ENCODE measurements at regions of chr19 and their contacts with region 1.

Region 1: DNA sequence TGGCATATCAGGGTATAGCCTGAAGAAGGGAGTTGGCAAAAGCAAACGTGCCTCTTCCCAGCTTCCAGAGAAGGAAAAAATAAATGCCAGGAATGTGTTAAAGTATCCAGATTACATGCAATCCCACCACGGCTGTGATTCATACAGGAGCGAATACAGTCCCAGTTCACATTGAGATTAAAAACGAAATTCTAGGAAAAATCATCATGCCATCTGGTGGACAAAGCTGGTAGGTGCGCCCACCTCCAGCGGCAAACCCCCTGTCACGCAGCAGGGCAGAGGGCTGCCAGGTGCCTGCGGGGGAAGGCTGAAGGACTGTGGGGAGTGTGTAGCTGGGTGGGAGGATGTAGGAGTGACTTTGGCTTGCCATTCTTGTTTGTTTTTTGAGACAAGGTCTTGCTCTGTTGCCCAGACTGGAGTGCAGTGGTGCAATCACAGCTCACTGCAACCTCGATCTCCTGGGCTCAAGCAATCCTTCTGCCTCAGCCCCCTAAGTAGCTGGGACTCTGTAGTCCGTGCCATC is 6.4 kb upstream of the DMWD start:
- DNase-seq: peak; percentile 32 to 59 (median 58)
- H3K4me3 ChIP-seq: no peak overlapping the region
- H3K4me3 Mint-ChIP-seq: peak overlapping the region in 1 of 2 donors; percentile 81
- H3K27ac ChIP-seq: no peak overlapping the region
- H3K27ac Mint-ChIP-seq: no peak overlapping the region
- H3K4me1 ChIP-seq: peaks cover under 1 to 2% of the 10 kb centered on the region in 2 donors
- H3K4me1 Mint-ChIP-seq: peaks cover 5% of the 10 kb centered on the region
- H3K27me3 ChIP-seq: peaks cover 45 to 95% of the 10 kb centered on the region in 2 donors
- H3K27me3 Mint-ChIP-seq: peaks cover 98 to 100% (median 99%) of the 10 kb centered on the region in 3 donors
- CTCF ChIP-seq: peak; percentile 93

Region 2: DNA sequence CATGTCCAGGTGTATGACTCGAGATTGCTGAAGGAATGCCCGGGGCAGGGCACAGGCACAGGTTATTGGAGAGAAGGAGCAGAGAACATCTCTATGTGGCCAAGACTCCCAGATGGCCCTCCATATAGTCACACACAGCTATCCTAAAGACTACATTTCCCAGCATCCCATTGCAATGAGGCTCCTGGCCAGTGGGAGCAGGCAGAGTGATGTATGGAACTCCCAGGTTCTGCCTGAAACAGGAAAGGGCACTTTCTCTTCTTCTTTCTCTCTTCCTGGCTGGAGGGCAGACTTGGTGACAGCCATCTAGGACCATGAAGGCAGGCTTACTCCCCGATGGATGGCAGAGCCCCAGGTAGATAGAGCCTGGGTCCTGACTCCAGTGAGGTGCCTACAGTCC is 407.7 kb before region 1 on chr19:
- intact Hi-C with region 1: no loop called
- DNase-seq: no peak
- H3K4me3 ChIP-seq: no peak overlapping the region
- H3K4me3 Mint-ChIP-seq: peak overlapping the region in 1 of 2 donors; percentile 76
- H3K27ac ChIP-seq: no peak overlapping the region
- H3K27ac Mint-ChIP-seq: peak overlapping the region in 1 of 7 donors; percentile 25
- H3K4me1 ChIP-seq: peaks cover 5% of the 10 kb centered on the region in 2 donors
- H3K4me1 Mint-ChIP-seq: peaks cover 10% of the 10 kb centered on the region
- H3K27me3 ChIP-seq: peaks cover 18 to 30% of the 10 kb centered on the region in 2 donors
- H3K27me3 Mint-ChIP-seq: peaks cover 42 to 47% (median 43%) of the 10 kb centered on the region in 3 donors
- CTCF ChIP-seq: no peak

Region 3: DNA sequence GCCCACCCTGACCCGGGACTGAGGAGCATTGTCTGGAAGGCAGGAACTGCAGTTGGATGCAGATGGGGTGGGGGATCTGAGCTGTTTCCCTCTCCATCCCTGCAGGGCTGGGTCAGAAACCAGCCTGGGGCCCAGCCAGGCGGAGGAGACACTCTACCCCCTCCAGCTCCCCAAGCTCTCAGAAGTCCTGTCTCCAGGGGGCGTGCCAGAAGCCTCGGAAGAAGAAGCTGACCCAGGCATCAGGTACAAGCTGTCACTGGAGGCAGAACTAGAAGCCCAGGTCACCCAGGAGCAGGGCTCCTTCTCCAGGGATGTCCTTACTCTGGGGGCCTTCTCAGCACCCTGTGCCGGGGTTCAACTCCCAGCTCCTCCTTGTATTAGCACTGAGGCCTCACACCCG is 45.5 kb before region 1 on chr19:
- intact Hi-C with region 1: no loop called
- DNase-seq: no peak
- H3K4me3 ChIP-seq: no peak overlapping the region
- H3K4me3 Mint-ChIP-seq: no peak overlapping the region
- H3K27ac ChIP-seq: no peak overlapping the region
- H3K27ac Mint-ChIP-seq: no peak overlapping the region
- H3K4me1 ChIP-seq: no peaks in the 10 kb centered on the region
- H3K4me1 Mint-ChIP-seq: no peaks in the 10 kb centered on the region
- H3K27me3 ChIP-seq: peaks cover 0 to 3% of the 10 kb centered on the region in 2 donors
- H3K27me3 Mint-ChIP-seq: peaks cover 27 to 43% (median 39%) of the 10 kb centered on the region in 3 donors
- CTCF ChIP-seq: no peak

Region 4: GRCh38 chr19:45770192-45771101 is 28.6 kb before region 1 on chr19:
- intact Hi-C with region 1: loop called (anchors 1 kb)
- DNase-seq: peak; percentile 75 to 80 (median 76)
- H3K4me3 ChIP-seq: peak overlapping the region in 2 of 3 experiments; percentile 26 to 77
- H3K4me3 Mint-ChIP-seq: peak overlapping the region; percentile 58 to 88
- H3K27ac ChIP-seq: no peak overlapping the region
- H3K27ac Mint-ChIP-seq: peak overlapping the region in 1 of 7 donors; percentile 50
- H3K4me1 ChIP-seq: peaks cover 27 to 35% of the 10 kb centered on the region in 2 donors
- H3K4me1 Mint-ChIP-seq: peaks cover 22% of the 10 kb centered on the region
- H3K27me3 ChIP-seq: peaks cover 58 to 92% of the 10 kb centered on the region in 2 donors
- H3K27me3 Mint-ChIP-seq: peaks cover 75 to 99% (median 82%) of the 10 kb centered on the region in 3 donors
- CTCF ChIP-seq: peak; percentile 99